ENCODE measurements at regions of chr16 and their contacts with region 1.

Region 1: GRCh38 chr16:30571695-30572600 is at the start of gene ZNF688:
- DNase-seq: peak; percentile 98
- H3K4me3 Mint-ChIP-seq: peak within 1 kb of the TSS; percentile 97
- H3K27ac Mint-ChIP-seq: peak within 1 kb of the TSS; percentile 91
- H3K4me1 Mint-ChIP-seq: peaks cover 49% of the 10 kb centered on the region
- H3K27me3 Mint-ChIP-seq: no peaks in the 10 kb centered on the region
- total RNA-seq, gene ZNF688: 6.6 and 8.0 TPM in 2 replicates

Region 2: DNA sequence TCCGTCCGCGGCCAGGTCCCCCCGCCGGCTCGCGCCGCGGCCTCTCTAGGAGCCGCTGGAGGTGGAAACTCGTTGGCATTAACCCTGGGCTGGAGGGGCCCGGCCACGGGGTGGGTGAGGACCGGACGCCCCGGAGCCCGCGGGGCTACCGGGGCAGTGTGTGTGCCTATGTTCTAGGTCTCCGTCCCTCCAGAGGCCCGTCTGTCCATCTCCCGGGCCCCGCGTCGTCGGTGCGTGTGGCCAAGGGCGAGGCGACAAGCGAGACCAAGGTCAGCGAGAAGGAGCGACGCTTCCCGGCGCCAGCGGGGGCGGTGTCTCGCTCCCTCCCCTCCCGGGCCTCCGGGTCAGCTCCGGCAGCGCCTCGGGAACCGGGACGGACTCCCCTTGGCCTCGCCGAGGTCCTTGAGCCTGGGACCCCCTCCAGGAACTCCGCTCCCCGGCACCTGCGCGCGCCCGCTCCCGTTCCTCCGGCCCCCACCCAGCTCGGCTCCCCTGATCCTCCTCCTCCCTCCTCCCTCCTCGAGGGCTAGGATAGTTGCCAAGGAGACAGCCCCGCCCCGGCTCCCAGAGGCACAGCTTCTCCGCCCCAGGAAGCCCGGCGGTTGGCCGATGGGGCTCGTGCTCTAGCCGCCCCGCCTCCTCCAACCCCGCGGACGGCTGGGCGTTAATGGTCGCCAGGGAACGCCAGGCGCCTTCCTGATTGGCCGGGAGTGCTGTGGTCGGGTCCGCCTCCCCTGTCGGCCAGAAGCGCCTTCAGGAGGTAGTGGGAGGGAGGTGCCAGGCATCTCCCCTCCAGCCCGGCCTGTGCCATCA is 44.9 kb before region 1 on chr16:
- intact Hi-C with region 1: loop called (anchors 2 kb)
- DNase-seq: peak; percentile 98
- H3K4me3 Mint-ChIP-seq: peak overlapping the region; percentile 81
- H3K27ac Mint-ChIP-seq: peak overlapping the region; percentile 81
- H3K4me1 Mint-ChIP-seq: peaks cover 26% of the 10 kb centered on the region
- H3K27me3 Mint-ChIP-seq: no peaks in the 10 kb centered on the region

Region 3: GRCh38 chr16:30557957-30558788 is 13.8 kb before region 1 on chr16 and contains the start of gene ZNF764:
- intact Hi-C with region 1: loop called (anchors 1 kb)
- DNase-seq: peak; percentile 99
- H3K4me3 Mint-ChIP-seq: peak within 1 kb of the TSS; percentile 91
- H3K27ac Mint-ChIP-seq: peak within 1 kb of the TSS; percentile 91
- H3K4me1 Mint-ChIP-seq: peaks cover 41% of the 10 kb centered on the region
- H3K27me3 Mint-ChIP-seq: no peaks in the 10 kb centered on the region
- total RNA-seq, gene ZNF764: 13.9 and 14.9 TPM in 2 replicates

Measured in activated CD4-positive, alpha-beta T cell treated with anti-CD3 and anti-CD28 coated beads, Interleukin-2, amount 10 ng/mL, durations not matched to agents 24 days and 14 days (primary cell).